Activated CD8-positive, alpha-beta T cell treated with anti-CD3 and anti-CD28 coated beads, Interleukin-2, amount 10 ng/mL, durations not matched to agents 7 days and 5 days (primary cell): ENCODE measurements at regions of chr9 and their contacts with region 1.

Region 1: DNA sequence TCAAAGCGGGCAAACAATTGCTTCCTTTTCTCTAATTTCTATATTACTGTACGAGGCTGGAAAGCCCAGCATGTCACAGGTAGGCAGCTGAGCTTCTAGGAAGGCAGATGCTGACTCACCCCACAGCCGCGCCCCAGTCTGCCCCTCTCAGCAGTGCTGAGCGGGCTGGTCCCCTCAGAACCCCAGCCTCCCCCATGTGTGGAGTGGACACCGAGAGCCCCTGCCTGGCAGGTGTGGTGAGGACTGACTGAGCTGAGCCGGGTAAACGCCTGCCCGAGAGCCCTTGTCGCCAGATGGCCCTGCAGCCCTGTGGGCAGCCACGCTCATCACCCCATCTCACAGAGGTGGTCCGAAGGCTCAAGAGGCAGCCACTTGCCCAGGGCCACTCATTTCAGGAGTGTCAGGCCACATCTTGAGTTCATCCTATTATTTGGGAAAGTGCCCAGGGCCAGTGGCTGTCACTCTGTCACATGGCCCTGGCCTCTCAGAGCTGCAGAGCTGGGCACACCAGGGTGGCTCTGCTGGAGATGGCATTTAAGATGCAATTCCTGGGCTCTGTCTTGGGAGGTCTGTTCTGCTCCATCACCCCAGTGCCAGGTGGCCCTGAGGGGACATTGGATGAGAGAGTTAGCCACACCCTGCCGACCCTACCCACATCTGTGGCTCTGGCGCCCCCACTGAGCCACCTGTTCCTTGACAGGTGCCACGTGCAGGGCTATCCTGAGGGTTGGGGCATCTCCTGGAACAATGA is 12.4 kb downstream of the CARD19 start:
- DNase-seq: no peak
- ATAC-seq: peak; percentile 48
- H3K4me3 Mint-ChIP-seq: no peak overlapping the region
- H3K27ac Mint-ChIP-seq: no peak overlapping the region
- H3K4me1 Mint-ChIP-seq: peaks cover 51% of the 10 kb centered on the region
- H3K27me3 Mint-ChIP-seq: no peaks in the 10 kb centered on the region

Region 2: GRCh38 chr9:93064392-93065134 is 43.9 kb before region 1 on chr9:
- CTCF ChIA-PET with region 1: interaction called, 13 read pairs
- POLR2A ChIA-PET with region 1: interaction called, 3 read pairs
- DNase-seq: peak; percentile 98
- ATAC-seq: peak; percentile 91
- H3K4me3 Mint-ChIP-seq: peak overlapping the region; percentile 79
- H3K27ac Mint-ChIP-seq: peak overlapping the region; percentile 96
- H3K4me1 Mint-ChIP-seq: peaks cover 87% of the 10 kb centered on the region
- H3K27me3 Mint-ChIP-seq: no peaks in the 10 kb centered on the region

Region 3: GRCh38 chr9:93119953-93120845 is 11.7 kb after region 1 on chr9:
- CTCF ChIA-PET with region 1: interaction called, 57 read pairs
- POLR2A ChIA-PET with region 1: no interaction called
- DNase-seq: peak; percentile 68
- ATAC-seq: peak; percentile 80
- H3K4me3 Mint-ChIP-seq: no peak overlapping the region
- H3K27ac Mint-ChIP-seq: peak overlapping the region; percentile 89
- H3K4me1 Mint-ChIP-seq: peaks cover 23% of the 10 kb centered on the region
- H3K27me3 Mint-ChIP-seq: no peaks in the 10 kb centered on the region

Region 4: GRCh38 chr9:93134015-93134739 is 25.7 kb after region 1 on chr9 and contains the start of gene NINJ1:
- CTCF ChIA-PET with region 1: interaction called, 21 read pairs
- POLR2A ChIA-PET with region 1: interaction called, 4 read pairs
- DNase-seq: peak; percentile 73
- ATAC-seq: peak; percentile 92
- H3K4me3 Mint-ChIP-seq: peak within 1 kb of the TSS; percentile 86
- H3K27ac Mint-ChIP-seq: peak within 1 kb of the TSS; percentile 87
- H3K4me1 Mint-ChIP-seq: peaks cover 51% of the 10 kb centered on the region
- H3K27me3 Mint-ChIP-seq: no peaks in the 10 kb centered on the region
- total RNA-seq, gene NINJ1: 20.8 to 21.1 TPM

Region 5: DNA sequence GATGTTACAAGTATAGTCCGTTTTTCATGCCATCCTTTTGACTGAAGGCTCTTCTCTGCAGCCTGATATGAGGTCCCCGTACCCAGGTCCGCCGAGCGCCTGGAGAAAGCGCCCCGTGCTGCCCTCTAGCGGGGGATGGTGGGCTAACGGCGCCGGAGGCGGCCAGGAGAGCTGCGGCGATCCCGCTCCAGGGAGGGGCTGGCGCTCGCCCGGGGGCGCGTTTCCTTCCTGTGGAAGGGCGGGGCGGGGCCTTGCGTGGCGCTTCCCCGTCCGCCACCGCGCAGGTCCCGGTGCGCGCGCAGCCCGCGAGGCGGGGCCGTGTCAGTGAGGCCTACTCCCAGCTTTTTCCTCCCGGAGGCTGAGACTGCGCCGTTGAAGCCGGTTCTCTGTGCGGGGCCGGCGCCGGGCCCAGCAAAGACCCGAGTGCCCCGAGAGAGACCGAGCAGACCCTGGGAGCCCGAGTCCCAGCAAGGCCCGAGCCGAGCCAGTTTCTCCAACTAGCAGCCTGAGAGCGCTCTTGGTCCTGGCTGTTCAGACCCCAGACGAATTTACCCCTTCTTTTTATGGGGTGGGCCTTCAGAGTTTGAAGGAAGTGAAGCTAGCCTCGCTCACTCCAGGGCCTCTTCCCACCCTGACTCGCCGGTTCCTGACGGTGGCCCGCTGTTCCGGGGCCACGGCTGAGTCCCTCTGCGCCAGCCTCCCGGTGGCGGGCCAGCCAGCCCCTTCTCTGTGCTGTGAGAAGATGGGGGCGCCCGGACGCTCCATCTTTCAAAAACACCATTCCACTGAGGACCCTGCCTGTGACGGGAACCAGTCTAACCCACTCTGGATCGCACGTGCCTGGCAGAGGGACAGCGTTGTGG is 458.2 kb after region 1 on chr9:
- CTCF ChIA-PET with region 1: interaction called, 20 read pairs
- POLR2A ChIA-PET with region 1: no interaction called
- DNase-seq: peak; percentile 98
- ATAC-seq: peak; percentile 96
- H3K4me3 Mint-ChIP-seq: peak overlapping the region; percentile 85
- H3K27ac Mint-ChIP-seq: peak overlapping the region; percentile 95
- H3K4me1 Mint-ChIP-seq: peaks cover 24% of the 10 kb centered on the region
- H3K27me3 Mint-ChIP-seq: no peaks in the 10 kb centered on the region